AG04450 (cell line): ENCODE measurements at regions of chr1 and their contacts with region 1.

Region 1: GRCh38 chr1:207404849-207405525 is 49.1 kb upstream of the CR2 start:
- DNase-seq: peak; percentile 38
- H3K4me3 ChIP-seq: no peak overlapping the region
- H3K27ac ChIP-seq: no peak overlapping the region
- H3K27me3 ChIP-seq: peaks cover 4% of the 10 kb centered on the region
- CTCF ChIP-seq: peak; percentile 80

Region 2: GRCh38 chr1:207049974-207050391 is 355.0 kb before region 1 on chr1:
- CTCF ChIA-PET with region 1: interaction called, 15 read pairs
- POLR2A ChIA-PET with region 1: no interaction called
- DNase-seq: no peak
- H3K4me3 ChIP-seq: peak overlapping the region; percentile 75
- H3K27ac ChIP-seq: peak overlapping the region; percentile 79
- H3K27me3 ChIP-seq: peaks cover 7% of the 10 kb centered on the region
- CTCF ChIP-seq: peak; percentile 86

Region 3: GRCh38 chr1:207084701-207085180 is 320.2 kb before region 1 on chr1:
- CTCF ChIA-PET with region 1: interaction called, 83 read pairs
- POLR2A ChIA-PET with region 1: no interaction called
- DNase-seq: peak; percentile 8
- H3K4me3 ChIP-seq: no peak overlapping the region
- H3K27ac ChIP-seq: no peak overlapping the region
- H3K27me3 ChIP-seq: peaks cover 8% of the 10 kb centered on the region
- CTCF ChIP-seq: peak; percentile 61

Region 4: DNA sequence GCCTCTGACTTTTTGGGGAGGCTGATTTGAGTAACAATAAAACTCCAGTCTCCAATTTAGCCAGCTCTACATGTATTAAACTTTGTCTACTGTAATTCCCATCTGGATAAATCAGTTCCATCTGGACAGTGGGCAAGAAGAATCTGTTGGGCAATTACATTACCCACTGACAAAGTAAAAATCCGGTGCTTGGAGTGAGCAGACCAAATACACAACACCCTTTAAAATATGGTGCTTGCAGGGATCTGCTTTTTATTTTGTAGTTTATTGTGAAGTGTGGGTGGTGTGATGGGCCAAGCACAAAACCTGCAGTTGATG is 92.4 kb before region 1 on chr1:
- CTCF ChIA-PET with region 1: no interaction called
- POLR2A ChIA-PET with region 1: no interaction called
- DNase-seq: no peak
- H3K4me3 ChIP-seq: no peak overlapping the region
- H3K27ac ChIP-seq: no peak overlapping the region
- H3K27me3 ChIP-seq: no peaks in the 10 kb centered on the region
- CTCF ChIP-seq: no peak

Region 5: GRCh38 chr1:207393610-207394009 is 11.4 kb before region 1 on chr1:
- CTCF ChIA-PET with region 1: interaction called, 21 read pairs
- POLR2A ChIA-PET with region 1: no interaction called
- DNase-seq: peak; percentile 78
- H3K4me3 ChIP-seq: no peak overlapping the region
- H3K27ac ChIP-seq: peak overlapping the region; percentile 47
- H3K27me3 ChIP-seq: no peaks in the 10 kb centered on the region
- CTCF ChIP-seq: no peak

Region 6: GRCh38 chr1:207499573-207499972 is 94.6 kb after region 1 on chr1:
- CTCF ChIA-PET with region 1: interaction called, 12 read pairs
- POLR2A ChIA-PET with region 1: no interaction called
- DNase-seq: peak; percentile 10
- H3K4me3 ChIP-seq: no peak overlapping the region
- H3K27ac ChIP-seq: no peak overlapping the region
- H3K27me3 ChIP-seq: peaks cover 16% of the 10 kb centered on the region
- CTCF ChIP-seq: peak; percentile 76